Pancreas (tissue), 10 donors: ENCODE measurements at regions of chr19 and their contacts with region 1.

Region 1: DNA sequence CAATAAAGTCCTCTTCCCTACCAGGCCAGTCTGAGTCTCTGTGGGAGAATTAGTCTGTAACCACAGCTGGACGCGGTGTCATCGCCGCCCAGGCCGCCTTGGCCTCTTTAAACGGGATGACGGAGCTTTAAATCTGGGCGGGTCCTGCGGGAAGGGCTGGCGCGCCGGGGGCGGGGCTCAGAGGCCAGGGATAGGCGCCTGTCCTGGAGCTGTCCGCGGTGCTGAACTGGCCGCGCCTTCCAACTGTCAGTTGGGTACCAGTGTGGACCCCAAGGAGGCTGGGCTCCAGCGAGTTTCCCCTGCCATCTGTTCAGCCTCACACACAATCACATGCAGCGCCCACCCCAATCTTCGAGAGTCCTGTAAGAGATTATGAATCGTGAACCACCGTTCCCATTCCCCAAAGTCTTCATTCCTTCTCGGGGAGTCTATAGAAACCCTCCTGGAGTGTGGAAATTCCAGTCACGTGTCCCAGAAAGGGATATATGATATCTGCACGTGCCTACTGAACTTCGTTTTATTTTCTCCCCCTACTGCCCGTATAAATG is 11.5 kb downstream of the APLP1 start:
- DNase-seq: peak; percentile 92 to 98 (median 96)
- ATAC-seq: peak; percentile 96 to 98 (median 97)
- H3K4me3 ChIP-seq: no peak overlapping the region
- H3K27ac ChIP-seq: peak overlapping the region; percentile 34 to 70 (median 50)
- H3K4me1 ChIP-seq: peaks cover 0 to 5% (median 5%) of the 10 kb centered on the region in 3 donors
- H3K27me3 ChIP-seq: no peaks in the 10 kb centered on the region
- CTCF ChIP-seq: no peak

Region 2: DNA sequence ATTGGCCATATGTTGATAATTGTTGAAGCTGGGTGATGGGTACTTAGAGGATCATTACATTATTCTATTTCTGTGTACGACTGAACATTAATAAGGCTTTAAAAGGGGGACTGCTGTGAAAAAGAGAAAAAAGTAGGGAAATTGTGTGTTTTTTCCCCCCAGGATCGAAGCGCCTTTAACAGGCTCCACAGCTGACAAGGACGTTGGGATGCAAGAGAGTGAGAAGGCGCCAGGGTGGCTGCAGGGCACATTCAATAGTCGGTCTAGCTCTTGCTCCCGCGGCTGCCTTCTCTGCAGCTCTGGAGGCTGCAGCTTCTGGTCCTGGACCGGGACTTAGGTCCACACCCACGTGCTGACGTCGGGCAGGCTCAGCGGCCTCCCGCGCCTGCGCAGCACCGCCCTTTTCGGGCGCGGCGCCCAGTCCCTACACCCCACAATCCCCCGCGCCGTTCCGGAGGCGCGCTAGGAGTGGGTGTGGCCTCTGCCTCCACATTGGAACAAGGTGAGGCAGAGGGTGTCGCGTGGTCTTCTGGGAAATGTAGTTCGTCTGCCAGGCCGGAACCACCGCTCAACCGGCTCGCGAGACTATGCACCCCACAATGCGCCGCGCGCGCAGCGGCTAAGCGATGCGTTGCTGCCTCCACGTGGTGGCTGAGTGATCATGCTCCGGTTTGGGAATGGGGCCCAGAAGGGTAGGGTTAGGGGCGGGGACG is 51.5 kb after region 1 on chr19:
- intact Hi-C with region 1: loop called in 2 of 3 experiments (anchors 5 to 10 kb)
- DNase-seq: peak; percentile 97 to 100 (median 100)
- ATAC-seq: peak; percentile 96 to 99 (median 98)
- H3K4me3 ChIP-seq: peak overlapping the region in 1 of 4 donors; percentile 19
- H3K27ac ChIP-seq: peak overlapping the region in 2 of 4 donors; percentile 43 to 66
- H3K4me1 ChIP-seq: peaks cover 0 to 10% (median 6%) of the 10 kb centered on the region in 3 donors
- H3K27me3 ChIP-seq: no peaks in the 10 kb centered on the region
- CTCF ChIP-seq: peak; percentile 42 to 80 (median 73)